ENCODE measurements at regions of chr12 and their contacts with region 1.

Region 1: GRCh38 chr12:3872800-3873636 is at the start of gene PARP11:
- DNase-seq: peak; percentile 98
- ATAC-seq: peak; percentile 98
- H3K4me3 ChIP-seq: peak within 1 kb of the TSS; percentile 71 to 91 (median 75)
- H3K4me3 Mint-ChIP-seq: peak within 1 kb of the TSS; percentile 94
- H3K27ac ChIP-seq: peak within 1 kb of the TSS; percentile 90 to 93
- H3K27ac Mint-ChIP-seq: peak within 1 kb of the TSS; percentile 94
- H3K4me1 ChIP-seq: peaks cover 33 to 37% of the 10 kb centered on the region in 2 donors
- H3K4me1 Mint-ChIP-seq: peaks cover 46% of the 10 kb centered on the region
- H3K27me3 ChIP-seq: no peaks in the 10 kb centered on the region
- H3K27me3 Mint-ChIP-seq: peaks cover 5% of the 10 kb centered on the region
- CTCF ChIP-seq: no peak
- total RNA-seq, gene PARP11: 24.3 and 26.3 TPM in 2 replicates

Region 2: DNA sequence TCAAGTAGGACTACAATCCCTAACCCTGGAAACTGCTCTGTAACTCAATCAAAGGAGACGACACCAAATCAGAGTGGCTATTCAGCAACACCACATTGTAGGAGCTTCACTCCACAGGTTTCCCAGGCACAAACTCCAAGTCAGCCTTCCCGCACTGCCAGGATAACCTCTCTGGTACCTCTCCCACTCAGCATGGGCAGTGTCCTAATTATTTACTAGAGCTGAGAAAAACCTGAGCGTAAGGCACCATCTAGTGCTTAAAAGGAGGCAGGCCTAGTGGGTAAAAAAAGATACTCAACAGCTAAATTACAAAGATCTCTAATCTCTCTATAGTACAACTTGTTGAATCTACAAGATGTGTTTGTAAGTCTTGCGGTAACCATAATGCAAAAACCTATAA is 36.0 kb before region 1 on chr12:
- CTCF ChIA-PET with region 1: interaction called, 3 read pairs
- POLR2A ChIA-PET with region 1: no interaction called
- intact Hi-C with region 1: loop called (anchors 5 kb)
- DNase-seq: peak; percentile 12
- ATAC-seq: no peak
- H3K4me3 ChIP-seq: peak overlapping the region in 1 of 5 experiments; percentile 8
- H3K4me3 Mint-ChIP-seq: peak overlapping the region; percentile 83
- H3K27ac ChIP-seq: no peak overlapping the region
- H3K27ac Mint-ChIP-seq: peak overlapping the region; percentile 59
- H3K4me1 ChIP-seq: peaks cover 21 to 22% of the 10 kb centered on the region in 2 donors
- H3K4me1 Mint-ChIP-seq: peaks cover 53% of the 10 kb centered on the region
- H3K27me3 ChIP-seq: no peaks in the 10 kb centered on the region
- H3K27me3 Mint-ChIP-seq: no peaks in the 10 kb centered on the region
- CTCF ChIP-seq: no peak

Region 3: GRCh38 chr12:3905664-3906063 is 32.6 kb after region 1 on chr12:
- CTCF ChIA-PET with region 1: no interaction called
- POLR2A ChIA-PET with region 1: no interaction called
- intact Hi-C with region 1: no loop called
- DNase-seq: no peak
- ATAC-seq: no peak
- H3K4me3 ChIP-seq: no peak overlapping the region
- H3K4me3 Mint-ChIP-seq: no peak overlapping the region
- H3K27ac ChIP-seq: no peak overlapping the region
- H3K27ac Mint-ChIP-seq: no peak overlapping the region
- H3K4me1 ChIP-seq: peaks cover 0 to 8% of the 10 kb centered on the region in 2 donors
- H3K4me1 Mint-ChIP-seq: peaks cover 5% of the 10 kb centered on the region
- H3K27me3 ChIP-seq: no peaks in the 10 kb centered on the region
- H3K27me3 Mint-ChIP-seq: peaks cover 15% of the 10 kb centered on the region
- CTCF ChIP-seq: no peak

Region 4: DNA sequence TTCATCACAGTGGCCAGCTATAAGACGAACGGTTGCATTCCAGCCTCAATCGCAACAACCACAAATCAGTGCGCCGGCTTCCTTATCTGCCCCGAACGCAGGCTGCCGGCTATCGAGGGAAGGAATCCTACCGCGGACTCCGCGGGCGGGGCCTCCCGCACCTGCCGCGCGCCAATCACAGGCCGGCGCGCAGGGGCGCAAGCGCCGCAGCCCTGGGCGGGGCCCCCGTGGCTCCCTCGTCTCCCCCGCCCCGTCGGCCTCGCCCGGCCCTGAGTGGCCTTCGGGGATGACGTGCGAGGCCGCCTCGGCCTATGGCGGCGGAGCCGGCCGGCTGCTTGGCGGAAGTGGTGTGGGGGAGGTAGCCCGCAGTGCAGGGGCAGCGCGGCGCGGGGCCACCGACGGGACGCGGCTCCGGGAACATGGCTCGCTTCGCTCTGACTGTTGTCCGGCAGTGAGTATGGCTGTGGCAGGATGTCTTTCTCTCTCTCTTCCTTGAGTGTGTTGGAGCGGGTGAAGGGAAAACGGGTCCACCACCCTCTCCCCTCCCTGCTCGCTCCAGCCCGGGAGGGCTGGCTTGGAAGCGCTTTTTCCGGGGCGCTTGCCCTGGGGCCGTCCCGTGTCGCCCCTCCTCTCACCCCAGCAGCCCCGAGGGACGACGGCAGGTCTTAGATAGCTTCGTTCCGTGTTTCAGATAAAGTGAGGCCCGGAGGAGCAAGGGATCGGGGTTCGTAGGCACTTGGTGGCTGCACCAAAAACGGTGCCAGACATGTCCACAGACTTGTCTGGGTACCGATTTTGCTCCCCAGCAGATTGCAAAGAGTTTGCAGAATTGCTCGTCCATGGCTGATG is 448.1 kb after region 1 on chr12 and contains the start of gene TIGAR:
- CTCF ChIA-PET with region 1: interaction called, 5 read pairs
- POLR2A ChIA-PET with region 1: no interaction called
- intact Hi-C with region 1: loop called (anchors 1 kb)
- DNase-seq: peak; percentile 95
- ATAC-seq: peak; percentile 97
- H3K4me3 ChIP-seq: peak within 1 kb of the TSS; percentile 69 to 98 (median 90)
- H3K4me3 Mint-ChIP-seq: peak within 1 kb of the TSS; percentile 94
- H3K27ac ChIP-seq: peak within 1 kb of the TSS; percentile 90 to 91
- H3K27ac Mint-ChIP-seq: peak within 1 kb of the TSS; percentile 88
- H3K4me1 ChIP-seq: peaks cover 26 to 30% of the 10 kb centered on the region in 2 donors
- H3K4me1 Mint-ChIP-seq: peaks cover 32% of the 10 kb centered on the region
- H3K27me3 ChIP-seq: no peaks in the 10 kb centered on the region
- H3K27me3 Mint-ChIP-seq: no peaks in the 10 kb centered on the region
- CTCF ChIP-seq: no peak
- total RNA-seq, gene TIGAR: 6.6 and 14.2 TPM in 2 replicates

Region 5: GRCh38 chr12:4538207-4539160 is 665.5 kb after region 1 on chr12 and contains the start of gene RAD51AP1:
- CTCF ChIA-PET with region 1: no interaction called
- POLR2A ChIA-PET with region 1: no interaction called
- intact Hi-C with region 1: loop called (anchors 1 kb)
- DNase-seq: peak; percentile 98
- ATAC-seq: peak; percentile 98
- H3K4me3 ChIP-seq: peak within 1 kb of the TSS; percentile 92 to 100 (median 99)
- H3K4me3 Mint-ChIP-seq: peak within 1 kb of the TSS; percentile 95
- H3K27ac ChIP-seq: peak within 1 kb of the TSS; percentile 94 to 99
- H3K27ac Mint-ChIP-seq: peak within 1 kb of the TSS; percentile 97
- H3K4me1 ChIP-seq: peaks cover 8 to 20% of the 10 kb centered on the region in 2 donors
- H3K4me1 Mint-ChIP-seq: peaks cover 35% of the 10 kb centered on the region
- H3K27me3 ChIP-seq: no peaks in the 10 kb centered on the region
- H3K27me3 Mint-ChIP-seq: no peaks in the 10 kb centered on the region
- CTCF ChIP-seq: no peak
- total RNA-seq, gene RAD51AP1: 3.4 and 4.6 TPM in 2 replicates

Region 6: GRCh38 chr12:4829161-4829792 is 956.3 kb after region 1 on chr12:
- CTCF ChIA-PET with region 1: no interaction called
- POLR2A ChIA-PET with region 1: no interaction called
- intact Hi-C with region 1: loop called (anchors 1 kb)
- DNase-seq: peak; percentile 87
- ATAC-seq: peak; percentile 88
- H3K4me3 ChIP-seq: peak overlapping the region; percentile 17 to 61 (median 38)
- H3K4me3 Mint-ChIP-seq: peak overlapping the region; percentile 82
- H3K27ac ChIP-seq: peak overlapping the region; percentile 76 to 87
- H3K27ac Mint-ChIP-seq: peak overlapping the region; percentile 93
- H3K4me1 ChIP-seq: peaks cover 85% of the 10 kb centered on the region in 2 donors
- H3K4me1 Mint-ChIP-seq: peaks cover 85% of the 10 kb centered on the region
- H3K27me3 ChIP-seq: no peaks in the 10 kb centered on the region
- H3K27me3 Mint-ChIP-seq: no peaks in the 10 kb centered on the region
- CTCF ChIP-seq: no peak